ENCODE measurements at regions of chr10 and their contacts with region 1.

Region 1: GRCh38 chr10:6202684-6203330 is at the start of gene PFKFB3:
- DNase-seq: peak; percentile 96
- ATAC-seq: peak; percentile 92 to 95
- total RNA-seq, gene PFKFB3: 30.7 to 56.1 TPM

Region 2: GRCh38 chr10:6088721-6089390 is 114.0 kb before region 1 on chr10 and contains the start of gene RBM17:
- intact Hi-C with region 1: no loop called
- DNase-seq: peak; percentile 97
- ATAC-seq: peak; percentile 95 to 98
- total RNA-seq, gene RBM17: 58.6 to 80.3 TPM

Region 3: DNA sequence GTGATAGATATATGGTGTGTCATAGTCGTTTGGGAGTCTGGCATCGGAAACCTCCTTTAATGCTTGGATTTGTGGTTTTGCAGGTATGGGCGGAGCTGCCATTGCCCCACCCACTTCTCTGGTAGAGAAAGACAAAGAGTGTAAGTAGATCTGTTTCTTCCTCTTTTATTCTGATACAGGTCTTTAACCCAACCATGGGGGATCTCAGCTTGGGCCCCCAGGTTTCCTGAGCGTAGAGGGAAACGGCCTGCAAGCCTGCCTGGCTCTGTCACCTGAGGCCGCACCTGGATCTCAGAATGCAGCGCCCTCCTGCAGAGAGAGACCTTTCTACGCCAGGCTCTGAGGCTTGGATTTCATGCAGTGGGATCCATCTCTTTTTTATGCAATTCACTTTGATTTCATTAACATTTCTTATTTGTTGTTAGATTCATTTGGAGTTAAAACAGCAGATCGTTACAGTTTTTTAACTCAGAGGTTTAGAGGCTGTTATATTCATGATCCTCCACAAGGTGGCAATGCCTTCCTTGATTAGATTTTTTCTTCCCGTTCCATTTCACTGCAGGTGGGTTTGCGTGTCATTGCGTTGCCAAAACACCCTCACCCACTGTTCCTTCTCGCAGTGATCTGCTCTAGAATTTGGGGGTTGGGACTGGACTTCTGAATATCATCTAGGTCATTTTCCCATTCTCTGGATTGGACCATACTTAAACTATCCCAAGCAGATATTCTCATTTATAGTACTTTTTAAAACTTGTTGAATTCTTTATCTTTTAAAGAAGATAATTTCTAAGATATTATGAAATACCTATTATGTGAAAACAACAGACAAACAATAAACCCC is 94.0 kb before region 1 on chr10:
- intact Hi-C with region 1: loop called in 1 of 2 experiments (anchors 10 kb)
- DNase-seq: no peak
- ATAC-seq: peak; percentile 38 to 48

Region 4: DNA sequence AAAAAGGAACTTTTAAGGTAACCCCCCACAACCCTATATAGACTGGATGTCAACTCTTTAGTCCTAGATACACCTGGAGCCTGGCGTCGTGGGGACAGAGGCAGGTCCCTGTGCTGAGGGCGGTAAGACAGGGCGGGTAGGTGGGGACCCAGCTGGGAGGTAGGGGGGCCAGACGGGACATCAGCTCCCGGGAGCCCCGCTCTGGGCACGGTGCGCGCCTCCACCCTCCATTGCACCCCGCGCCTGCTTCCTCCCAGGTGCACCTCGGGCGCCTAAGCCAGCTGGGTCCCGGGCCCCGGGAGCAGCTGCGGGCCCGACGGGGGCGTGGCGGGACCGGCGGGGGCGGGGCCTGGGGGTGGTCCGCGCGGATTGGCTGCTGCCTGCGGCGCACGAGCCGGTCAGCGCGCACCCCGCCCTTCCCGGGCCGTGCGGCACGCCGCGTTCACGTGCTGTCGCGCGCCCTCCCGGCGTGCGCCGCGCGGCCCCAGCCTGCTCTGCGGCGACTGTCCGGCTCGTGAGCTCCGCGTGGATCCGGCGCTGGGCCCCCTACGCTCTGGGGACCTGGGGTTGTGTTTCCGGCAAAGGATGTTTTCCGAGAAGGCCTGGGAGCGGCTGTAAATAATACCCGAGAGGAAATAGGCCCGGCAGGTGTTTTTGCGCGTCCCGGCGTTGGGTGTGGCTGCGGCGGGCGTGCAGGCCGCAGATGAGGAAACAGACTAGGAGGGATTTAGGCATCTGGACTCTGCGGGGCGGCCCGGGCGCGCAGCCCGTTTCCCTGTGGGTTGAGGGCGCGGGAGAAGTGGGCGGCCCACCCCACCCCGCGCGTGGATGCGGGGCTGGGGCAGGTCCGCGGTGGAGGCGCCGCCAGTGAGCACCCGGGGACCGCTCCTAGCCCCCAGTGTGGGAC is 39.2 kb before region 1 on chr10:
- intact Hi-C with region 1: loop called in 1 of 2 experiments (anchors 2 kb)
- DNase-seq: peak; percentile 92
- ATAC-seq: peak; percentile 98 to 99

Region 5: DNA sequence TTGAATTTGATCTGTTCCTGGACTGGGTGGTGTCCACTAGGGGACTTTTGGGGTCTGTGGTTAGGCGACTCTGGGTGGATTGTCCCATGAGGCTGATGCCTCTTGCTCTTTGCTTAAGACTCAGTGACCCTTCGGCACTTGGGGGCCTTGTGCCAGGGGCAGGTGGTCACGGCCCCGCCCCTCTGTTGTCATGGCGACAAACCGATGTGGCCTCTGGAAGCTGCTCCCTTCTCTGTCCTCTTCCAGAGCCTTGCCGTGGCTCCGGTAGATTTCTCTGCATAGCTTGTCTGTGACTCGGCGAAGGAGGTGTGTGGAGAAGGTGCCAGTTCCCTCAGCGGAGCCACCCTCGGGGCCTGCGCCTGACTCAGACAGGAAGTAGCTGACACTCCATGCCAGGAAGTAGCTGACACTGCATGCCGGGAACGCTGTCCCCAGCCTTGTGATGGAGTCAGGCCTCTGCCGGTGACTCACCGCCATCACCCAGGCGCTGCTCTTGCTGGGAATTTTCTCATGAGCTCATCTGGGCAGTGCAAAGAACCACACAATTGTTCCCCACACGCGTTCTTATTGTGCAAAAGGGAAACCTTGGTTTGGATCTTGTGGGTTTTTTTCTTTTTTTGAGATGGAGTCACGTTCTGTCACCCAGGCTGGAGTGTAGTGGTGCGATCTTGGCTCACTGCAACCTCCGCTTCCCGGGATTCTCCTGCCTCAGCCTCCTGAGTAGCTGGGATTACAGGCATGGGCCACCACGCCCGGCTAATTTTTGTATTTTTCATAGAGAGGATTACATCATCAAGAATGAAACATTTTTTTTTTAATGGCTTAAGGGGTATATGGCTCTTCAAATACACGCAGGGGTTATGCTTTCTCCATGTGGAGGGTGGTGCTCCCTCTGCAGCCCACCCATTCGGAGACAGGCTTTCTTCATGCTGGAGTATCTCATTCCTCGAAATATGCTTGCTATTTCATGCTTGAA is 72.5 kb after region 1 on chr10:
- intact Hi-C with region 1: loop called in 1 of 2 experiments (anchors 10 kb)
- DNase-seq: peak; percentile 95
- ATAC-seq: peak; percentile 97 to 98

Region 6: DNA sequence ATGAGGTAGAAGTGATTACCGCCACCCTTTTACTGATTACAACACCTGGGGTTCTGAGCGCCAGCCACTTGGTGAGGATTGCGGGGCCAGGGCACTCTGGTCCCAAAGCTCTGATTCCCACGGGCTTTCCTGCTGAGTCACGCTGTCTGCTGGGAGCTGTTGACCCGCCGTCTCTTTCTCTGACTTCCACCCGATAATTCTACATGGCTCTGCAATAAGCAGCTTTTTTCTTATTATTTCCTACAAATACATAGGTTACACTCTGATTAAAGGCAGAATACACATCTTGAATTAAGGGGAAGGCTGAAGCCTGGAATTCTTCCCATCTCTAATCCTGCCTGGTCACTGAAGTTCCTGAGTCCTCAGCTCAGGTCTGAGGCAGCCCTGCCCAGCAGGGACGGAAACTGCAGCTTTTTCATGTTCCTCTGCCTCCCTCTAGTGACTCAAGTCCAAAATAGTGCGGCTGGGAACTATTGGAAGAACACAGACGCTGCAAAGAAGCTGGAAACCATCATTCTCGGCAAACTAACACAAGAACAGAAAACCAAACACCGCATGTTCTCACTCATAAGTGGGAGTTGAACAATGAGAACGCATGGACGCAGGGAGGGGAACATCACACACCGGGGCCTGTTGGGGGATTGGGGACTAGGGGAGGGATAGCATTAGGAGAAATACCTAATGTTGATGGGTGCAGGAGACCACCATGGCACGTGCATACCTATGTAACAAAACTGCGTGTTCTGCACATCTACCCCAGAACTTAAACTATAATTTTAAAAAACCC is 198.9 kb after region 1 on chr10:
- intact Hi-C with region 1: loop called (anchors 2 to 10 kb)
- DNase-seq: peak; percentile 80
- ATAC-seq: peak; percentile 95 to 97

Measured in left cardiac atrium (tissue), 4 donors.